ENCODE measurements at regions of chr19 and their contacts with region 1.

Region 1: GRCh38 chr19:4851551-4852290 is 15.7 kb downstream of the PLIN3 start:
- DNase-seq: peak; percentile 53
- H3K4me3 ChIP-seq: no peak overlapping the region
- H3K27ac ChIP-seq: no peak overlapping the region
- H3K4me1 ChIP-seq: no peaks in the 10 kb centered on the region
- H3K27me3 ChIP-seq: no peaks in the 10 kb centered on the region
- CTCF ChIP-seq: peak; percentile 78 to 90
- POLR2A ChIP-seq: no peak

Region 2: DNA sequence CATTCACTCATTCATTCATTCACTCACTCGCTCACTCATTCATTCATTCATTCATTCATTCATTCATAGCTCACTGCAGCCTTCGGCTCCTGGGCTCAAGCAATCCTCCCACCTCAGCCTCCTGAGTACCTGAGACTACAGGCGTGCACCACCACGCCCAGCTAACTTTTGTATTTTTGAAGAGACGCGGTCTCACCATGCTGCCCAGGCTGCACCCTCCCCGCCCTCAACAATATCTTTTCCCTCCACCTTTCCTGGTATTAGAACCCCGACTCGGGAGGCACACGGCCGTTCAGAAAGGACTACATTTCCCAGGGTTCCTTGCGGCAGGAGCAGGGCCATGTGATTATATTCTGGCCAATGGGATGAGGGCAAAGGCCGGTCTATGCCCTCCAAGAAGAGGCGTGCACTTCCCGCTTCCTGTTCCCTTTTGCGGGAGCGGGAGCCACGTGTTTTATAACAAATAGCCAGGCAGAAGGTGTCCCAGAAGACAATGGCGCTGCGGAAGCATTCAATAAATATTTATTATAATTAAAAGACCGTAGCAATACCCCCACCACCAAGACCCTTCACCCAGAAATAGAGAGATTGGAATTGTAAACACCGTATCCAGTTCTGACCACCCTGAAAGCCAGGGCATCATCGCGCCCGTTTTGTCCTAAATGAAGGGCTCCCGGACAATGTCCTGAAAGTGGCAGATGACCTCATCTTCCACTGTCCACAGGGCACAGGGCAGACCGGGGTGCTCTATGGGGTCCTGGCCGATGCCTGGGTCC is 36.1 kb before region 1 on chr19:
- CTCF ChIA-PET with region 1: interaction called, 514 read pairs
- POLR2A ChIA-PET with region 1: interaction called, 6 read pairs
- dilution Hi-C with region 1: no loop called
- intact Hi-C with region 1: no loop called
- DNase-seq: peak; percentile 88
- H3K4me3 ChIP-seq: peak overlapping the region in 1 of 3 experiments; percentile 14
- H3K27ac ChIP-seq: no peak overlapping the region
- H3K4me1 ChIP-seq: peaks cover 5% of the 10 kb centered on the region
- H3K27me3 ChIP-seq: no peaks in the 10 kb centered on the region
- CTCF ChIP-seq: no peak
- POLR2A ChIP-seq: no peak

Region 3: DNA sequence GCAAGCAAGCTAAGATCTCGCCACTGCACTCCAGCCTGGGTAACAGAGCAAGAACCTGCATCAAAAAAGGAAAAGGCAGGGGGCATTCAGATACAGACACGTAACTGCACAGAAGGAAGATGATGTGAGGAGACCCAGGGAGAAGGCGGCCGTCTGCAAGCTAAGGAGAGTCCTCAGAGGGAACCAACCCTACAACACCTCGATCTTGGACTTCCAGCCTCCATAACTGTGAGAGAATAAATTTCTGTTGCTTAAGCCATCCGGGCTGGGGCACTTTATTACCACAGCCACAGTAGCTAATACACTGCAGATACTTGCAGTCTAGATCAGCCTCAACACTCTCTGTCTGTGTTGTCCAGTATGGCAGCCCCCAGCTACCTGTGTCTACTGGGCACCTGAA is 28.1 kb before region 1 on chr19:
- CTCF ChIA-PET with region 1: interaction called, 20 read pairs
- POLR2A ChIA-PET with region 1: no interaction called
- dilution Hi-C with region 1: no loop called
- intact Hi-C with region 1: no loop called
- DNase-seq: no peak
- H3K4me3 ChIP-seq: no peak overlapping the region
- H3K27ac ChIP-seq: no peak overlapping the region
- H3K4me1 ChIP-seq: no peaks in the 10 kb centered on the region
- H3K27me3 ChIP-seq: no peaks in the 10 kb centered on the region
- CTCF ChIP-seq: no peak
- POLR2A ChIP-seq: no peak

Region 4: GRCh38 chr19:4831304-4831978 is 20.3 kb before region 1 on chr19 and contains the start of gene TICAM1:
- CTCF ChIA-PET with region 1: interaction called, 11 read pairs
- POLR2A ChIA-PET with region 1: no interaction called
- dilution Hi-C with region 1: no loop called
- intact Hi-C with region 1: no loop called
- DNase-seq: peak; percentile 66
- H3K4me3 ChIP-seq: peak within 1 kb of the TSS; percentile 97 to 100 (median 98)
- H3K27ac ChIP-seq: peak within 1 kb of the TSS; percentile 90
- H3K4me1 ChIP-seq: peaks cover 8% of the 10 kb centered on the region
- H3K27me3 ChIP-seq: no peaks in the 10 kb centered on the region
- CTCF ChIP-seq: no peak
- POLR2A ChIP-seq: peak; percentile 83
- total RNA-seq, gene TICAM1: 17.6 and 19.0 TPM in 2 replicates

Region 5: GRCh38 chr19:4839186-4839585 is 12.5 kb before region 1 on chr19:
- CTCF ChIA-PET with region 1: interaction called, 11 read pairs
- POLR2A ChIA-PET with region 1: no interaction called
- dilution Hi-C with region 1: no loop called
- intact Hi-C with region 1: no loop called
- DNase-seq: no peak
- H3K4me3 ChIP-seq: no peak overlapping the region
- H3K27ac ChIP-seq: no peak overlapping the region
- H3K4me1 ChIP-seq: no peaks in the 10 kb centered on the region
- H3K27me3 ChIP-seq: no peaks in the 10 kb centered on the region
- CTCF ChIP-seq: no peak
- POLR2A ChIP-seq: no peak

Region 6: DNA sequence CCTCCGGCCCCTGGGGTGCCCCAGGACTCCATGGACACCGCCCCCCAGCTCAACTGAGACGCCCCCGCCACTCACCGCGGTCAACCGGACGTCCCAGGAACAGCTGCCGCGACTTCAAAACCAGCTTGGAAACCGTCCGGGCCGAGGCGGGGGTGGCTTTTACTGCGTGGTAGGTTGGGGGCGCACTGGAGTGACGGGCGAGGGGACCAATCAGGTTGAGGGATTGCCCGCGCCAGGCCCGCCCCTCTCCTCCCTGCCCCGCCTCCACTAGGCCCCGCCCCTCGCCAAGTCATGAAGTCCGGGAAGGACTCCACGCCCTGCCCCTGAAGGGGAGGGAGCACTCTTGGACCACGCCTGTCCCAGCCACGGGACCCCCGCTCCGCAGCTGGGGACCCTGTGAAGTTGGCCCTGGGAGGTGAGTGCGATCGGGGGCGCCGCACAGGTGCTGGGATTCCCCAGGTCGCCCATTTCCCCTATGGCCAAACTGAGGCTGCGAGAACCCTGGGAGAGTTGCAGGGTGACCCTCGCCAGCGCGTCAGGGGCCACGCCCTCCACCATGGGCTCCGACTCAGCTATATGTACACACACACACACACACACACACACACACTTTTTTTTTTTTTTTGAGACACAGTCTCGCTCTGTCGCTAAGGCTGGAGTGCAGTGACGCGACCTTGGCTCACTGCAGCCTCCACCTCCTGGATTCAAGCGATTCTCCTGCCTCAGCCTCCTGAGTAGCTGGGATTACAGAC is 16.0 kb after region 1 on chr19 and contains the start of gene PLIN3:
- CTCF ChIA-PET with region 1: interaction called, 31 read pairs
- POLR2A ChIA-PET with region 1: no interaction called
- dilution Hi-C with region 1: no loop called
- intact Hi-C with region 1: no loop called
- DNase-seq: peak; percentile 98
- H3K4me3 ChIP-seq: peak within 1 kb of the TSS; percentile 70 to 95 (median 92)
- H3K27ac ChIP-seq: peak within 1 kb of the TSS; percentile 49
- H3K4me1 ChIP-seq: peaks cover 6% of the 10 kb centered on the region
- H3K27me3 ChIP-seq: no peaks in the 10 kb centered on the region
- CTCF ChIP-seq: no peak
- POLR2A ChIP-seq: peak; percentile 43
- total RNA-seq, gene PLIN3: 76.8 and 77.9 TPM in 2 replicates

Region 7: DNA sequence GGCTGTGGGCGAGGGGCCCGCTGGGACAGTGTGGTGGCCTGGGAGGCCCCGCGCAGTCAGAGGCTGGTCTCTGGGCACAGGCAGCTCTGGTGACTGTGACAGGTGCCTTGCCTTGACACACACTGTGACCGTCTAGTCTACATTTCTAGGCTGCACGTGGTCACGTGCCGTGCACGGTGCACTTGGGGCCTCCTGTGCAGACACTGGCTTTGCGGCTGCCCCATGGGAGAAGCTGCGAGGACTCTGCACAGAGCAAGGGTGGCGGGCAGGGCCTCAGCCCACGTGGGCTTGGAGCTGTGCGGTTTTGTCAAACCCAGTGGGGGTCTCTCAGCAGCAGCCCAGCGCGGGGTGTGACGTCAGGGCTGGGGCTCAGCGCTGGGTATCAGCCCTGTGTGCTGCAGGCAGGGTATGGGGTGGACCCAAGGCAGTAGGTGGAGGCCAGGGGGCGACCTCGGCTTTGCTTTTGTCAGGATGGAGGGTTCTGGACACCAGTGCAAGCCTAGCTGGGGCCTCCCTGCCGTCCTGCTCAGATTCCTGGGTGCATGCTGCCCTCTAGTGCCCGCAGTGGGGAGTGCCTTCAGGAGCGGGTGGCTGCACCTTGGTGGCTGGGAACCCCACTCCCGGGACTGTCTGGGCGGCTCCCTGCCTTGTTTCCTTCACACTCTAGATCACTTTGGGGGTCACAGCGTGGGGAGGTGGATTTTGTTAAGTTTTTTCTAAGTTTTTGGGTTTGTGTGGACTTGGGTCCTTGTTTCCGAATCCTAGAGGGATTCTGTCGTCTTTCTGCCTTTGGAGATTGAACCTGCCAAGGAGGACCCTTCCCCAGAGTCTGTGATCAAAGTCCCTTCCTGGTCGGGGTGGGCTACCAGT is 179.7 kb after region 1 on chr19:
- CTCF ChIA-PET with region 1: interaction called, 23 read pairs
- POLR2A ChIA-PET with region 1: no interaction called
- dilution Hi-C with region 1: no loop called
- intact Hi-C with region 1: no loop called
- DNase-seq: peak; percentile 61
- H3K4me3 ChIP-seq: no peak overlapping the region
- H3K27ac ChIP-seq: no peak overlapping the region
- H3K4me1 ChIP-seq: no peaks in the 10 kb centered on the region
- H3K27me3 ChIP-seq: no peaks in the 10 kb centered on the region
- CTCF ChIP-seq: peak; percentile 92 to 95
- POLR2A ChIP-seq: no peak

Measured in endothelial cell of umbilical vein (primary cell).